Activated CD4-positive, alpha-beta memory T cell treated with anti-CD3 and anti-CD28 coated beads, Interleukin-2, amount 10 ng/mL, durations not matched to agents 7 days and 5 days (primary cell): ENCODE measurements at regions of chr11 and their contacts with region 1.

Region 1: GRCh38 chr11:62855571-62856332 is 16.4 kb upstream of the WDR74 start:
- DNase-seq: peak; percentile 99
- H3K4me3 Mint-ChIP-seq: peak overlapping the region; percentile 97
- H3K27ac Mint-ChIP-seq: peak overlapping the region; percentile 96
- H3K4me1 Mint-ChIP-seq: peaks cover 75% of the 10 kb centered on the region
- H3K27me3 Mint-ChIP-seq: no peaks in the 10 kb centered on the region

Region 2: GRCh38 chr11:62556108-62556871 is 299.5 kb before region 1 on chr11:
- CTCF ChIA-PET with region 1: interaction called, 5 read pairs
- POLR2A ChIA-PET with region 1: interaction called, 11 read pairs
- DNase-seq: peak; percentile 94
- H3K4me3 Mint-ChIP-seq: peak overlapping the region; percentile 74
- H3K27ac Mint-ChIP-seq: peak overlapping the region; percentile 99
- H3K4me1 Mint-ChIP-seq: peaks cover 99% of the 10 kb centered on the region
- H3K27me3 Mint-ChIP-seq: no peaks in the 10 kb centered on the region

Region 3: GRCh38 chr11:62645956-62646824 is 209.6 kb before region 1 on chr11 and contains the start of gene GANAB:
- CTCF ChIA-PET with region 1: interaction called, 4 read pairs
- POLR2A ChIA-PET with region 1: interaction called, 10 read pairs
- DNase-seq: peak; percentile 99
- H3K4me3 Mint-ChIP-seq: peak within 1 kb of the TSS; percentile 99
- H3K27ac Mint-ChIP-seq: peak within 1 kb of the TSS; percentile 94
- H3K4me1 Mint-ChIP-seq: peaks cover 47% of the 10 kb centered on the region
- H3K27me3 Mint-ChIP-seq: no peaks in the 10 kb centered on the region
- total RNA-seq, gene GANAB: 278 to 284 TPM

Region 4: GRCh38 chr11:62753736-62754603 is 101.8 kb before region 1 on chr11 and contains the start of gene ZBTB3:
- CTCF ChIA-PET with region 1: interaction called, 8 read pairs
- POLR2A ChIA-PET with region 1: interaction called, 33 read pairs
- DNase-seq: peak; percentile 97
- H3K4me3 Mint-ChIP-seq: peak within 1 kb of the TSS; percentile 95
- H3K27ac Mint-ChIP-seq: peak within 1 kb of the TSS; percentile 93
- H3K4me1 Mint-ChIP-seq: peaks cover 33% of the 10 kb centered on the region
- H3K27me3 Mint-ChIP-seq: no peaks in the 10 kb centered on the region
- total RNA-seq, gene ZBTB3: 13.3 to 13.4 TPM

Region 5: GRCh38 chr11:62805076-62805892 is 50.5 kb before region 1 on chr11 and contains the start of gene NXF1:
- CTCF ChIA-PET with region 1: interaction called, 3 read pairs
- POLR2A ChIA-PET with region 1: interaction called, 68 read pairs
- DNase-seq: peak; percentile 96
- H3K4me3 Mint-ChIP-seq: peak within 1 kb of the TSS; percentile 90
- H3K27ac Mint-ChIP-seq: peak within 1 kb of the TSS; percentile 86
- H3K4me1 Mint-ChIP-seq: peaks cover 40% of the 10 kb centered on the region
- H3K27me3 Mint-ChIP-seq: no peaks in the 10 kb centered on the region
- total RNA-seq, gene NXF1: 80.3 to 82.4 TPM

Region 6: GRCh38 chr11:62880803-62881578 is 25.2 kb after region 1 on chr11 and contains the start of gene SLC3A2:
- CTCF ChIA-PET with region 1: interaction called, 44 read pairs
- POLR2A ChIA-PET with region 1: interaction called, 234 read pairs
- DNase-seq: peak; percentile 92
- H3K4me3 Mint-ChIP-seq: peak within 1 kb of the TSS; percentile 99
- H3K27ac Mint-ChIP-seq: peak within 1 kb of the TSS; percentile 100
- H3K4me1 Mint-ChIP-seq: peaks cover 51% of the 10 kb centered on the region
- H3K27me3 Mint-ChIP-seq: no peaks in the 10 kb centered on the region
- total RNA-seq, gene SLC3A2: 262 to 279 TPM